ENCODE measurements at regions of chr9 and their contacts with region 1.

Region 1: DNA sequence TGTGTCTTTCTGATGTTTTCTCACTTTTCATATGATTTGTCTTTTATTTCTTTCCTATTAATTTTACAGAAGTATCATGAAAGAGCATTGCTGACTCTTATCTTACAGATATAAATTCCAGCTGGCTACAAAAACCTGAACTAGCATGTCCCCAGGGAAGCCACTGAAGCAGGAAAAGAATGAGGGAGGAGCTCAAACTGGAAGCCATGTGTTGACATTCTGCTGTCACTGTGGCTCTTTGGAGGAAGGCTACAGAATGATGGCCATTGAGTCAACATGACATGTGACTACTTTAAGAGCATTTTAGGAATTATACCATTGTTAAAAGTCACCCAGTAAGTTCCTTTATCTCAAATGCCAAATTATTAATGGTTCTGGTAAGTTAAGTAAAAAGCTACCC is 638.3 kb upstream of the DMAC1 start:
- DNase-seq: no peak
- H3K4me3 ChIP-seq: no peak overlapping the region
- H3K27ac ChIP-seq: no peak overlapping the region
- H3K4me1 ChIP-seq: no peaks in the 10 kb centered on the region
- H3K27me3 ChIP-seq: no peaks in the 10 kb centered on the region
- CTCF ChIP-seq: no peak

Region 2: GRCh38 chr9:8400378-8400777 is 37.5 kb before region 1 on chr9:
- intact Hi-C with region 1: loop called (anchors 1 kb)
- DNase-seq: no peak
- H3K4me3 ChIP-seq: no peak overlapping the region
- H3K27ac ChIP-seq: no peak overlapping the region
- H3K4me1 ChIP-seq: no peaks in the 10 kb centered on the region
- H3K27me3 ChIP-seq: no peaks in the 10 kb centered on the region
- CTCF ChIP-seq: no peak

Region 3: GRCh38 chr9:8946461-8946860 is 508.6 kb after region 1 on chr9:
- intact Hi-C with region 1: no loop called
- DNase-seq: no peak
- H3K4me3 ChIP-seq: no peak overlapping the region
- H3K27ac ChIP-seq: no peak overlapping the region
- H3K4me1 ChIP-seq: no peaks in the 10 kb centered on the region
- H3K27me3 ChIP-seq: no peaks in the 10 kb centered on the region
- CTCF ChIP-seq: no peak

Measured in tibial artery (tissue), 4 donors.